A673 (cell line): ENCODE measurements at regions of chr10 and their contacts with region 1.

Region 1: DNA sequence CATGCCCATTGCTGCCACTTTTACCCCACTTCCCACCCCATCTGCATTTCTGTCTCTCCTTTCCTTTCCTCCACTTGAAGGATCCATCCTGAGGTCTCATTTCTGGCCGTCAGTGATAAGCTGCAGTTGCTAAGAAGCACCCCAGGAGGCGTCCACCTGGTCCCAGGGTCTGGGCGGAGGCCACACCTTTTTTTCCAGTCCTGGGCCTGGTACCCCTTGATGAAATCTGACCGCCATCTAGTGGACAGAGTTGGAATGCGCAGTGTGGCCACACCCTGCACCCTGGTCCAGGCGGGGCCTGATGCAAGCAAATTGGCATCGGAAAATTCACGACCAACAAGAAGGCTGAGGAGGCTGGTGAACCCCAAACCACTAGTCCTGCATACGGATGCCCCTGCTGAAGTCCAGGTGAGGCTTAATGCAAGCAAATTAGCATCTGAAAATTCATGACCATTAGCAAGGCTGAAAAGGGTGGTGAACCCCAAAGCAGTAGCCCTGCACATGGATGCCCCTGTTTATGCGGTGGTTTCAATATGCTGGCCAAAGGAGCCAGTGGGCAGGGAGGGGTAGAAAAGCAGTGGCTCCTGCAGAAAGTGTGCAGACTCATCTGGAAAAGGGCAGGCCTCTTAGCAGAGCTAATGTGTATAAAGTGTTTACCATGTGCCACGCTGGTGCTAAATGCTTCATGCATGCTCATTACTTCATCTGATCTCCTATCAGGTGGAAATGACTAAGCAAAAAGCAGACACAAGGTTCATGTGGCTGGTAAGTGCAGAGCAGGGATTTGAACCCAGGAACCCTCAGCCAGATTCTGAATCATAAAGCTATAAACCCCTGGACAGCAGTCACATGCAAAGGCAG is 43.2 kb downstream of the GPAM start:
- DNase-seq: peak; percentile 80
- H3K4me3 ChIP-seq: no peak overlapping the region
- H3K27ac ChIP-seq: no peak overlapping the region
- H3K4me1 ChIP-seq: no peaks in the 10 kb centered on the region
- H3K27me3 ChIP-seq: no peaks in the 10 kb centered on the region
- CTCF ChIP-seq: peak; percentile 93

Region 2: DNA sequence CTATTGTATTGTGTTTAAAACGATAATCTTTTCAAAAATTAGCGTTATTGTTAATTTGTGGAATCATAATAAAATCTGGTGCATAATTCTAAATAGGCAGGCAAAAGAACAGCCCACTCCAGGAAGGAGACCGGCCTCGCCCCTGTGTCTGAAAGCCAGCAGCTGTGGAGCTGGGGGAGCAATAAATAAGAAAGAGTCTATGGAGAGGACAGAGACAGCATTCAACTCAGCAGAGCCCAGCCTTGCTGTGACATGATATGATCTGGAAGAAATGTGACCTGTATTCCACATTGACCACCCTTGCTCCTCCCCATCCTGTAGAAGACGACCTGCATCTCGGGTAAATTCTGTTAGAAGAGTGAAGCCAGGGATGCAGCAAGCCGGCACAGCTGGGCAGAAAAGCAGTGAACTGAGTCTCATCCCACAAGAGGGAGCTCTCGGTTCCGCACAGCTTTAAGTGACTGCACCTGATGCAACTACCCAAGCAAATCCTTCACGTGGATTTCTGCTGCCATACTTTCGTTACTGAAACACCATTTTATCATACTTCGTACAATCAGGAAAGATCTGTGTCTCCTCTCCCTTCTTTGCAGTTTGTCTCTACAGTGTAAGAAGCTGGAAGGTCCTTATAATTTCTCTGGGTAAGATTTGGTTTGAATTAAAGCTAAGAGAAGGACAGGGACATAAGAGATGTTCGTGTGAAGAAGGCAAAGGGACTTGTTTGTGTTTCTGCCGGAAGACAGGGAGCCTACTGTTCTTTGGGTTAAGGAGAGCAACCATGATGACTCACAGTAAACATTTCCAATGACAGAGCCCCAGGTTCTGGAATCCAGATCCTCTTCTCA is 383.9 kb before region 1 on chr10:
- CTCF ChIA-PET with region 1: interaction called, 7 read pairs
- POLR2A ChIA-PET with region 1: no interaction called
- intact Hi-C with region 1: loop called (anchors 2 kb)
- DNase-seq: peak; percentile 73
- H3K4me3 ChIP-seq: no peak overlapping the region
- H3K27ac ChIP-seq: no peak overlapping the region
- H3K4me1 ChIP-seq: no peaks in the 10 kb centered on the region
- H3K27me3 ChIP-seq: peaks cover 5% of the 10 kb centered on the region
- CTCF ChIP-seq: peak; percentile 77

Region 3: GRCh38 chr10:112434988-112435619 is 294.8 kb after region 1 on chr10:
- CTCF ChIA-PET with region 1: interaction called, 6 read pairs
- POLR2A ChIA-PET with region 1: no interaction called
- intact Hi-C with region 1: loop called (anchors 10 kb)
- DNase-seq: peak; percentile 60
- H3K4me3 ChIP-seq: no peak overlapping the region
- H3K27ac ChIP-seq: no peak overlapping the region
- H3K4me1 ChIP-seq: no peaks in the 10 kb centered on the region
- H3K27me3 ChIP-seq: no peaks in the 10 kb centered on the region
- CTCF ChIP-seq: peak; percentile 61